CD4-positive, alpha-beta memory T cell (primary cell): ENCODE measurements at regions of chr15 and their contacts with region 1.

Region 1: DNA sequence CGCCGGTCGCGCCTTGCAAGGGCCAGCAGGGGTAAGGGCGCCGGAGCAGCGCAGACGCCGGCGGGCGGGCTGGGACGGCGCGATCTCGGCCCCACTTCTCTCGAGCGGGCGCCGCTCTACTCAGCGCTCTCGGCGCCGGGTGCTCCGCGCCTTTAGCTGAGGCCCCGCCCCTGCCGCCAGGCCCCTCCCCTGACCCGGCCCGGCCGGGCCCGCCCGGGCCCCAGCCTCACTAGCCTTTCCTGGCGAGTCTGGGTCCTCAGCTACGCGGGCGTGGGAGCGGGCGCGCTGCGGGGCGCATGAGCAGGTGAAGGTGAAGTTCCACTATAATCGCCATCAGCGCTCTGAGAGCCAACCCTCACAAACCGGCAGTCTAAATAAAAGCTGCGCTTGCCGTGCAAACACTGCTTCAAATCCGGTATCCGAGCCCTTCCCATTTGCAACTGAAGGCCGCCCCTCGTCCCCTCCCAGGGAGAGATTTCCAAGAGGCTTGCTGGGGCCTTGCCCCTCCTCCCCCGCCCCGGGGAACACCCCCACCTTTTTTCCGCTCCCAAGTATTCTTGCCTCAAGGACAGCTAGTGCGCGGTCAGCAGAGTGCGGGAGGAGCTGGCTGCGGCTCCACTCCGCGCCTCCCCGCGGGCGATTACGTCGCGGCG is at the start of gene RPP25:
- DNase-seq: peak; percentile 43 to 56 (median 52)
- H3K4me3 ChIP-seq: peak within 1 kb of the TSS; percentile 12 to 68
- H3K4me3 Mint-ChIP-seq: peak within 1 kb of the TSS; percentile 75 to 82 (median 80)
- H3K27ac ChIP-seq: no peak within 1 kb of the TSS
- H3K27ac Mint-ChIP-seq: no peak within 1 kb of the TSS
- H3K4me1 ChIP-seq: peaks cover 40% of the 10 kb centered on the region
- H3K4me1 Mint-ChIP-seq: peaks cover 6 to 35% (median 19%) of the 10 kb centered on the region in 4 donors
- H3K27me3 ChIP-seq: peaks cover 19% of the 10 kb centered on the region
- H3K27me3 Mint-ChIP-seq: peaks cover 19 to 20% of the 10 kb centered on the region in 2 donors
- total RNA-seq, gene RPP25: 2.6 to 2.8 TPM

Region 2: DNA sequence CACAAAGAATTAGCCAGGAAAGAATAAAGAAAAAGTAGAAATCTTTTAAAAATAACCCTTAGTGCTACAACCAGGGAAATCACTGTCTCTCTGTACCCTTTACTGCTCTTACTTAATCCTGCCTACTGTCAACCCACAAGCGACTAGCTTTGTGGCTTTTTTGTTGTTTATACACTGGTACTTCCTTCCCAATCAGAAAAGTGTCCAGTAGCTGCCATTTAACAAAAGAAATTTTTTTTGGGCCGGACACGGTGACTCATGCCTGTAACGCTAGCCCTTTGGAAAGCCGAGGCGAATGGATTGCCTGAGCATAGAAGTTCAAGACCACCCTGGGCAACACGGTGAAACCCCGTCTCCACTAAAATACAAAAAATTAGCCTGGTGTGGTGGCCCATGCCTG is 36.3 kb before region 1 on chr15:
- CTCF ChIA-PET with region 1: no interaction called
- POLR2A ChIA-PET with region 1: no interaction called
- intact Hi-C with region 1: loop called (anchors 1 kb)
- DNase-seq: no peak
- H3K4me3 ChIP-seq: no peak overlapping the region
- H3K4me3 Mint-ChIP-seq: no peak overlapping the region
- H3K27ac ChIP-seq: no peak overlapping the region
- H3K27ac Mint-ChIP-seq: no peak overlapping the region
- H3K4me1 ChIP-seq: no peaks in the 10 kb centered on the region
- H3K4me1 Mint-ChIP-seq: peaks cover 0 to 2% (median 0%) of the 10 kb centered on the region in 4 donors
- H3K27me3 ChIP-seq: no peaks in the 10 kb centered on the region
- H3K27me3 Mint-ChIP-seq: no peaks in the 10 kb centered on the region

Region 3: DNA sequence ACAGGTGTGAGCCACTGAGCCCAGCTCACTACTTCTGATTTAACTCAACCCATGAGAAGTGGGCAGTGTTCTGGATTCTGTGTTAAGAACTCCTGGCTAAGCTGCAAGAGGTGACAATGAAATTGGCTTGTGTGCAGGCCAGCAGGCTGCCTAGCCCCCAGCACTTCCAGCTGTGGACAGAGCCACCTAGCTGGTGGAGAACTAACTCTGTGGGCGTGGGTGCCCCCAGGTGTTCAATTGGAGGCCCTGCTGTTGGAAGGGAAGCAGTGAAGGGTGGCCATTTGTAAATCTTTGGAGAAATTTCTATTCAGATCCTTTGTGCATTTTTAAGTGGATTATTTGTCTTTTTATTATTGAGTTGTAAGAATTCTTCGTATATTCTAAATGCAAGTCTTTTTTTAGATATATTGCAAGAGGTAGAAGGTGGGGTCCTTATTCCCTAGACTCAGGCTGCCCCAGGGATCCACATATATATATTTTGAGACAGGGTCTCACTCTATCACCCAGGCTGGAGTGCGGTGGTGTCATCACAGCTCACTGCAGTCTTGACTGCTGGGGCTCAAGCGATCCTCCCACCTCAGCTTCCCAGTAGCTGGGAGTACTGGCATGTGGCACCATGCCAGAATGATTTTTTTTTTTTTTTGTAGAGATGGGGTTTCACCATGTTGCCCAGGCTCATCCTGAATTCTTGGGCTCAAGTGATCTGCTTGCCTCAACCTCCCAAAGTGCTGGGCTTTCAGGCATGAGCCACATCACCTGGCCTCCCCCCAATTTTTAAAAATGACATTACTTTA is 31.4 kb after region 1 on chr15:
- CTCF ChIA-PET with region 1: interaction called, 4 read pairs
- POLR2A ChIA-PET with region 1: no interaction called
- intact Hi-C with region 1: loop called (anchors 1 kb)
- DNase-seq: peak in 3 of 5 donors; percentile 15 to 20 (median 15)
- H3K4me3 ChIP-seq: no peak overlapping the region
- H3K4me3 Mint-ChIP-seq: no peak overlapping the region
- H3K27ac ChIP-seq: no peak overlapping the region
- H3K27ac Mint-ChIP-seq: no peak overlapping the region
- H3K4me1 ChIP-seq: no peaks in the 10 kb centered on the region
- H3K4me1 Mint-ChIP-seq: no peaks in the 10 kb centered on the region
- H3K27me3 ChIP-seq: no peaks in the 10 kb centered on the region
- H3K27me3 Mint-ChIP-seq: peaks cover 3 to 16% of the 10 kb centered on the region in 2 donors